Activated T-helper 1 cell treated with anti-CD3 and anti-CD28 coated beads, Interleukin-12 subunit alpha, Interleukin-12 subunit beta, Interleukin-2, Interleukin-4 antibody, amounts not matched to agents 30 ng/mL and 10 ng/mL and 1 ng/mL, durations not matched to agents 14 hours and 24 hours and 36 hours (primary cell): ENCODE measurements at regions of chr19 and their contacts with region 1.

Region 1: DNA sequence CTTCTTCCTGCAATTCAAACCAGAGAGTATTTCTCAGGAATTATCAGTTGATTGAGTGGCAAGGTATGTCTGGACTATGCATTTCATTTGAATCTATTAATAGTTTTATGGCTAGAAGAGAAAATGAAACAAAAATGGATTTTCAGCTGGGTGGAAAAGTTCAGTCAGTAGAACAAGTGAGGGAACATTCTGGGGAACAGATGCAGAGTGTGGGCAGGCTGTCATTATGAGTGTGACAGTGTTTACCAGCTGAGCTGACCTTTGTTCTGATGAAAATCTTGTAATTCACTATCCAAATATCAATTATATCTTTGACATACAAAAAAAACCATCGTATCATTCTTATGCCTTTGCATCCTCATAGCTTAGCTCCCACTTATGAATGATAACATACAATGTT is 2.6 kb upstream of the CLC start:
- DNase-seq: no peak
- H3K4me3 Mint-ChIP-seq: peak overlapping the region; percentile 75
- H3K27ac Mint-ChIP-seq: peak overlapping the region; percentile 87
- H3K4me1 Mint-ChIP-seq: peaks cover 47% of the 10 kb centered on the region
- H3K27me3 Mint-ChIP-seq: peaks cover 6% of the 10 kb centered on the region

Region 2: DNA sequence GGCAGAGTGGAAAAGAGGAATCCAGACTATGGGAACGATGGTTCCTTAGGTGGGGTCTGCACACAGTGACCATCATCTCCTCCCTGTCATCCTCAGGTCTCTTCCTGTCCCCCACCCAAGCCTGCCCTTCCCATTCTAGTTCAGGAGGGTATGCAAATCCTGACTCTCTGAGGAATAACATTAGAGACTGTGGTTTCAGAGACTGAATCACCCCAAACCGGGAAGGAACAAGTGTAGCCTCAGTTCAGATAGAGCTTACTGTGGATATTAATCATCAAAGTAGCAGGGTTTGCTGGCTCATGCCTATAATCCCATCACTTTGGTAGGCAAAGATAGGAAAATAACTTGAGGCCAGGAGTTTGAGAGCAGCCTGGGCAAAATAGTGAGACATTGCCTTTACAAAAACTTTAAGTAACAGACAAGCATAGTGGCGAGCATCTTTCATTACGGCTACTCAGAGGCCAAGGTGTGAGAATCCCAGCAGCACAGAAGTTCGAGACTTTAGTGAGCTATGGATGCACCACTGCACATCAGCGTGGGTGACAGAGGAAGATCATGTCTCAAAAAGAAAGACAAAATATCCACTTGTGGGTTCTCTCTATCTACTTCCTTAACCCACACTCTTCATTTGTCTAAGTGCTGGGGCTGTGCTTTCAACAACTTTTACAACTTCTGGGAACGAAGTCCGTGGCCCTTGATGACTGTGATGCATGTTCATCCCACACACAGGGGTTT is 157.3 kb before region 1 on chr19:
- intact Hi-C with region 1: loop called (anchors 1 kb)
- DNase-seq: no peak
- H3K4me3 Mint-ChIP-seq: no peak overlapping the region
- H3K27ac Mint-ChIP-seq: no peak overlapping the region
- H3K4me1 Mint-ChIP-seq: no peaks in the 10 kb centered on the region
- H3K27me3 Mint-ChIP-seq: peaks cover 8% of the 10 kb centered on the region

Region 3: DNA sequence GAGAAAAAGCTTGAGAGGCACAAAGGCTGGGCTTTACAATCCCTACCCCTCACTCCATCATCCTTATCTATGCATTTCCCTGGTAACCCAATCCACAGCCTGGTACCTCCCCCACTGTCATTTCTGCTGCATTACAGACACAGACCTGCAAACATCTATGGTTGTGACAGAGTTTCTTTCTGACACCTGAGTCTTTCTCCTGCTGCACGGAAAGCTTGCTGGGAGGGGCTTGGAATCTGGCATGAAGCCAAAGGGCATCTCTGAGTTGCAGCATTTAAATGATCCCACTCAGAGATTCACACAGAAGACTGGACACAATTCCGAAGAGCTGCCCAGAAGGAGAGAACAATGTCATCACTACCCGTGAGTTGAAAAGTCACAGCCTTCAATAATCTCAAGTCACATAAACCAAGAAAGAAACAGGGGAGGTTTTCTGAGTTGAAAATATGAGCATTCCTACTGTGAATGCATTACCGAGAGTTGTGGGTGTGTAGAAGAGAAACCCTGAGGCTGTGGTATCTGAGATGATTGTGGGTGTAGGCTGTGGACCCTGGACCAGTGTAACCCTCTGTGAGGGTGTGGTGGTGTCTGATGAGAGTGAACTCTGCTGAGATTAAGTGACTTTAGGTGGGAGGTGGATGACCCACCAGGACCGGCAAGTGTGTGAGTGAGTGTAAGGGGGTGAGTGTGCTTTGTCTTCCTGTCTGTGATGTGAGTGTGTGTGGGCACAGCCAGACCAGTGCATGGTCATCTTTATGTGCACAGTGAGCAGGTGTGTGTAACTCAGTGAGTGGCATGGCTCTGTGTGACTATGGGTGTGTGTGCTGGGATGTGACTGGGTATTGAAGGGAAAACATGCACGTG is 36.0 kb before region 1 on chr19 and contains the start of gene LGALS14:
- intact Hi-C with region 1: loop called (anchors 1 kb)
- DNase-seq: no peak
- H3K4me3 Mint-ChIP-seq: peak within 1 kb of the TSS; percentile 53
- H3K27ac Mint-ChIP-seq: peak within 1 kb of the TSS; percentile 88
- H3K4me1 Mint-ChIP-seq: peaks cover 34% of the 10 kb centered on the region
- H3K27me3 Mint-ChIP-seq: no peaks in the 10 kb centered on the region
- total RNA-seq, gene LGALS14: 0.56 TPM in 1 of 2 replicates, not detected in the other